ENCODE measurements at regions of chr17 and their contacts with region 1.

Region 1: DNA sequence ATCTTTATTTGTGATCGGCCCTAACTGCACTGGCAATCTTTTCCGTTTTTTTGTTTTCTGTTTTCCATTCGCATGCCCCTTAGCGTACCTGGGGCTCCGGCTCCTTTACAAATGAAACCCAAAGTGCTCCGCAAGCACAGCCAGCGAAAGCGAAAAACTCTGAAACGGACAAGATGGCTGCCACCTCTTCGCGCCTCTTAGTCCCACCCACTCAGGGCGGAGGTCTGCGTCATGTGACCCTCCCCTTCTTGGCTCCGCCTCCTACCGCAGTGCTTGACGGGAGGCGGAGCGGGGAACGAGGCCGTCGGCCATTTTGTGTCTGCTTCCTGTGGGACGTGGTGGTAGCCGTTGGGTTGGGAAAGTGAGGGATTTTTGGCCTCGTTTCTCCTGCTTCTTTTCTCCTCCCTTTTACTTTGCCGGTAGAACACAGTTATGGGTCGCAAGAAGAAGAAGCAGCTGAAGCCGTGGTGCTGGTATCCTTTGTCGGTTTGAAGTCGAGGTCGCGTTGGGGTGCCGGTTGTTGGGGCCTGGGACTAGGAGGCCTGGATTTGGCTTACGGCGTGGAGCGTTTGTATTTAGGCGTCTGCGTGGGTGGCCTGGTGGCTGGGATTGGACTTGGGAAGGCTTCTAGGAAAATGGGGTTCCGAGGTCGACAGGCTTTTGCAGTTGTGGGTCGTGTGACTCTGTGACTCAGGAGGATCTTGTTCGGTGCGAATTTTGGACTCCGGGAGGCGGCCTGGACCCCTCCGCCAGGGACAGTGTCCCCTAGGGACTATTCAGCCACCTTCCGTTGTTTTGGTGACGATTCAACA is at the start of gene ZNF207:
- DNase-seq: peak; percentile 98
- H3K4me3 ChIP-seq: peak within 1 kb of the TSS; percentile 98
- H3K27ac ChIP-seq: peak within 1 kb of the TSS; percentile 87
- H3K4me1 ChIP-seq: peaks cover 39% of the 10 kb centered on the region
- CTCF ChIP-seq: no peak
- total RNA-seq, gene ZNF207: 121 and 157 TPM in 2 replicates

Region 2: DNA sequence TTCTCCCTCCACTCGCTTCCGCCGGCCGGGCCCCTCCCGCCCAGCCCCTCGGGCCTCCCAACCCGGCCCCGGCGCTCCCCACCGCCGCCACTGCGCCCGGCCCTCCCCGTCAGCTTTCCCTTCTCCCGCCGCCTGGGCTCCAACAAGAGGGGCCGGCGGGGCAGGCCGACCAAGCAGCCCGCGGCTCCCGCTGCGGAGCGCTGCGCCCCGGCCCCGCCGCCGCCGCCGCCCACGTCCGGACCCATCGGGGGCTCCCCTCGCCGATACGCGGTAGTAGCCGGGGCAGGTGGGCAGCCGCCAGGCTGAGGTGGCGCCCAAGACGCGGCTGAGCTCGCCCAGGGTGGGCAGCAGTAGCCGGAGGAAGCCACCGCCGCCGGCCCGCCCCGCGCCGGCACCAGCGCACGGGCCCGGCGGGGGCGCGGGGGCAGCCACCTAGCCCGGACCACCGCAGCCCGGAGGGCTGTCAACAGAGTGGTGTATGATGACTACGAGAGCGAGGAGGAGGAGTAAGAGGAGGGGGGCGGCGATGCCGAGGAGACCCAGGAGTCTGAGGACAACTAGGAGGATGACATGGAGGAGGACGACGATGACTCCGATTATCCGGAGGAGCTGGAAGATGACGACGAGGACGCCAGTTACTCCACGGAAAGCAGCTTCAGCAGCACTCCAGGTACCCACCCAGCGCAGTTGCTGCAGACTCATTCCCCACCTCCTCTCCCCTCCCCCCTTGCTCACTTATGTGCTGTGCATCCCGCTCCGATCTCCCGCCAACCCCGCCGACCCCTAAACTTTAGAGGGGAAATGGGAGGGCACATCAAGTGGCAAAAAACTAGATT is 342.4 kb before region 1 on chr17:
- CTCF ChIA-PET with region 1: no interaction called
- POLR2A ChIA-PET with region 1: no interaction called
- intact Hi-C with region 1: loop called (anchors 2 kb)
- DNase-seq: peak; percentile 59
- H3K4me3 ChIP-seq: peak overlapping the region; percentile 98
- H3K27ac ChIP-seq: peak overlapping the region; percentile 50
- H3K4me1 ChIP-seq: peaks cover 13% of the 10 kb centered on the region
- CTCF ChIP-seq: no peak

Region 3: GRCh38 chr17:32444308-32445073 is 94.4 kb after region 1 on chr17 and contains the start of gene PSMD11:
- CTCF ChIA-PET with region 1: no interaction called
- POLR2A ChIA-PET with region 1: no interaction called
- intact Hi-C with region 1: loop called (anchors 1 kb)
- DNase-seq: peak; percentile 98
- H3K4me3 ChIP-seq: peak within 1 kb of the TSS; percentile 99
- H3K27ac ChIP-seq: peak within 1 kb of the TSS; percentile 50
- H3K4me1 ChIP-seq: peaks cover 25% of the 10 kb centered on the region
- CTCF ChIP-seq: peak; percentile 14; the same call in 1 of the 2 replicates
- total RNA-seq, gene PSMD11: 81.0 and 89.3 TPM in 2 replicates